ENCODE measurements at regions of chr7 and their contacts with region 1.

Region 1: GRCh38 chr7:98841179-98841997 is 28.4 kb downstream of the TMEM130 start:
- DNase-seq: peak; percentile 33 to 67
- ATAC-seq: peak; percentile 64

Region 2: DNA sequence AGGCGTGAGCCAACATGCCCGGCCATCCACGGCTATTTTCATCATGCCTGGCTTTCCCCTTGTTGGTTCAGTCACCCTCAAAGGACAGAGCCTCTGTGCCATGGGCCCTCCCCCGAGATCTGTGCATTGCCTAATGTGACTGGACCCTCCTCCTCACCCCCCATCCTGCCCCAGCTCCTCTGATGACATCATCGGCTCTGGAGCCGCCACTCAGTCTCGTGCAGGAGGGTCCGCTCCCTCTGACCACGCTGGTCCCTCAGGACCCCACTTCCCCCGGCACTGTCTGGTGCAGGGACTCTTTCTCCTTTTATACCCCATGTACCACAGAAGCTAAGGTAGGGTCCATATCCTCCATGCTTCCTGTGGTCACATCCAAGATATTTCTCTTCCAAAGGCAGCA is 407.3 kb before region 1 on chr7:
- intact Hi-C with region 1: loop called (anchors 5 kb)
- DNase-seq: no peak
- ATAC-seq: no peak

Region 3: DNA sequence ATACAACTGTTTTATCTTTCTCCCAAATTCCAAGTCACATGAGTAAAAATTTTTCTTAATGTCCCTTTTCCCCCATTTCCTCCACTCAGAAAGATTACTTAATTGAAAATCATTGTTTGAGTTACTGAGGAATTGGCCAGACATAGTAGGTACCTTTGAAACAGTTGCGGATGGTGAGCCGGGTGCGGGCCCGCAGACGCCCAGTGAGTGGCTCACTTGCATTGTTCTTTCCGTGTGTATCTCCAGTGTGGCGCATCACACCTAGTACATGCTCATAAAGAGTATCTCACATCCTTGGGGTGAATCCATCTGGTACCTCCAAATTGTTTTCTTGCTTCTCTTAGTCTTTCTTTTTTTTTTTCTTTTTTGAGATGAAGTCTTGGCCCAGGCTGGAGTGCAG is 51.2 kb after region 1 on chr7:
- intact Hi-C with region 1: no loop called
- DNase-seq: no peak
- ATAC-seq: no peak

Region 4: GRCh38 chr7:98922393-98923187 is 81.2 kb after region 1 on chr7:
- intact Hi-C with region 1: no loop called
- DNase-seq: no peak
- ATAC-seq: peak; percentile 75

Region 5: GRCh38 chr7:99733448-99733847 is 892.1 kb after region 1 on chr7:
- intact Hi-C with region 1: no loop called
- DNase-seq: no peak
- ATAC-seq: no peak

Measured in left colon (tissue), 2 donors.